Activated CD8-positive, alpha-beta T cell treated with anti-CD3 and anti-CD28 coated beads, Interleukin-2, amount 10 ng/mL, durations not matched to agents 7 days and 5 days (primary cell): ENCODE measurements at regions of chr17 and their contacts with region 1.

Region 1: DNA sequence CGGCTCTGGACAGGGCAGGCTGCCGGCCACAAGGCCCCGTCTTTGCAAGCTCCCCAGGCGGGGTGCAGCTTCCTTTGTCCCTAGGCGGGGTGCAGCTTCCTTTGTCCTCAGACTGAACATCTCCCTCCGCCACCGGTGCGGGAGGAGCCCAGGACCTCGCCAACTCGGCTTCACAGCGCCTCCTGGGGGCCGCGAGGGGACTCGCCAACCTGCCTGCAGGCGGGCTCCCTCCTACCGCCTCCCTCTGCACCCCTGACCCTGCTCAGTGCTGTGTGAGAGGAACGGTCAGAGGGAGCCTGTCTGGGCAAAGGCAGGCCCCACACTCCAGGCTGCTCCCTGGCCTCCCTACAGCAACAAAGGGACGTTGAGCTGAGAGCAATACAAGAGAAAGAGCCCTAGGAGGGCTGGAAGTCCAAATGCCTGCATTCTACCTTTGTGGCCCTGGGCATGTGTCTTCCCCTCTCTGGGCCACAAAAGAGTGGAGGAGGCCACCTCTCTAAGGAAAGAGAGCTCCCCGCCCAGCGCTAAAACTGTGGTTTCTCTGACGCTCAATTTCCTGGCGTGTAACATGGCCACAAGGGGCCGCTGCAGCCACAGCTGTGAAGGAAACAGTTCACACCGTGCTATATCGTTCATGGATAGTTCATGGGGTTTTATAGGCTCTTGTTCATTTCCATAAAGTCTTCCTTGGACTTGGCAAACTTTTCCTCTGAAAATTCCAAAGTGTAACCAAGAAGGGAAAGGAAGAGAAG is 20.9 kb upstream of the KRT19 start:
- DNase-seq: peak; percentile 92
- ATAC-seq: peak; percentile 91
- H3K4me3 Mint-ChIP-seq: peak overlapping the region; percentile 23
- H3K27ac Mint-ChIP-seq: peak overlapping the region; percentile 77
- H3K4me1 Mint-ChIP-seq: peaks cover 20% of the 10 kb centered on the region
- H3K27me3 Mint-ChIP-seq: peaks cover 10% of the 10 kb centered on the region

Region 2: GRCh38 chr17:40857535-40857934 is 691.5 kb before region 1 on chr17:
- CTCF ChIA-PET with region 1: interaction called, 20 read pairs
- POLR2A ChIA-PET with region 1: no interaction called
- DNase-seq: no peak
- ATAC-seq: no peak
- H3K4me3 Mint-ChIP-seq: no peak overlapping the region
- H3K27ac Mint-ChIP-seq: no peak overlapping the region
- H3K4me1 Mint-ChIP-seq: no peaks in the 10 kb centered on the region
- H3K27me3 Mint-ChIP-seq: peaks cover 21% of the 10 kb centered on the region

Region 3: GRCh38 chr17:41308251-41308917 is 240.6 kb before region 1 on chr17:
- CTCF ChIA-PET with region 1: interaction called, 11 read pairs
- POLR2A ChIA-PET with region 1: no interaction called
- DNase-seq: peak; percentile 74
- ATAC-seq: peak; percentile 79
- H3K4me3 Mint-ChIP-seq: peak overlapping the region; percentile 48
- H3K27ac Mint-ChIP-seq: peak overlapping the region; percentile 90
- H3K4me1 Mint-ChIP-seq: peaks cover 42% of the 10 kb centered on the region
- H3K27me3 Mint-ChIP-seq: no peaks in the 10 kb centered on the region

Region 4: DNA sequence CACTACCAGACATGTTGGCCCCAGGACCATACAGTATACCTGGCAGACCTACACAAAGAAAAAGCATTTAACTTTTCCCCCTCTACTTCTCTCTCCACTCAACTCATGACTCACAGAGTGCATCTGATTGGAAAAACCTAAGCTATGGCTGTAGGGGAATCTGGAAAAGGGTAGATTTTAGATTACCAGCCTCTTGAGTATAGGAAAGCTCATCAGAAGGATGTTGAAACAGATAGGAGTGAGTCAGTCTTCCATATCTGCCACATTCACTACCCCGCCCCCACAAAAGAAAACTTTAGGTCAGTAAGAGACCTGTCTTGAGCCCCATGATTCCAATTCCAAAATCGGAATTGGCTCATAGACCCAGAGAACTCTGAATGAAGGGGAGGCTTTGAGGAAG is 10.5 kb after region 1 on chr17:
- CTCF ChIA-PET with region 1: interaction called, 31 read pairs
- POLR2A ChIA-PET with region 1: no interaction called
- DNase-seq: no peak
- ATAC-seq: no peak
- H3K4me3 Mint-ChIP-seq: no peak overlapping the region
- H3K27ac Mint-ChIP-seq: no peak overlapping the region
- H3K4me1 Mint-ChIP-seq: no peaks in the 10 kb centered on the region
- H3K27me3 Mint-ChIP-seq: peaks cover 31% of the 10 kb centered on the region

Region 5: DNA sequence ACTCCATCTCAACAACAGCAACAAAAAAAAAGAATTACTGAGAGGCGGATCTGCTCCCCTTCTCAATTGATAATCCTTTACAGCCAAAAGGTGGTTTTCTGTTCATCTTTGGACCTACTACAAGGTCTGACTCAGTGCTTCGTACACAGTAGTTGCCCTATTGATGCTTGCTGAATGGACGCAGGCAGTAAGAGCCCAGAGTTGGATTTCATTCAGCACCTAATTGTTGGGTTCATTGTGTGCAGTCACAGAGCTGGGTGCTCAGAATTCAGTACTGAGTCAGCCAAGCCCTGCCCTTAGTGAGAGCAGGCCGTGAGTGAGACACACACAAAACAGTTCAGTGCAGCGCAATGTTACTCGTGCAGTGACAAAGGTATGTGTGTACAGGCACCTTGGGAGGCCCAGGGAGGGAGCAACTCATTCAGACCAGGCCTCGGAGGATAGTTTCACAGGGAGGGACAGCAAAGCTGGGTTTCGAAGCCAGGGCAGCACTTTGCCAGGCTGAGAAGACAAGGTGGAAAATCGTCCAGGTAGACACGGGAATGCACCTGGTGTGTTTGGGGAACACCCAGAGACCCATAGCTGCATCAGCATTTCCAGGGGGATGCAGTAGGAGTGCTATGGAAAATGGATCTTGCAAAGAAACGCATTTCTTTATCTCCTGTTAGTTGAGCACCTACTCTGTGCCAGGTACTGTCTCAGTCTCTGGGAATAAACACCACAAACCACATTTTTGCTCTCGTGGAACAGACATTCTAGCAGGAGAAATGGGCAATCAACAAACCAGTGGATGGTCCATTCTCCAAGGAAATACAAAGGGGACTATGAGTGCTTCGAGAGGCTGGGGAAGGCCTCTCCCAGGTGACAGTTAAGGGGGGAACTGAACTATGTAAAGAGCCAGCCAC is 93.5 kb after region 1 on chr17:
- CTCF ChIA-PET with region 1: interaction called, 107 read pairs
- POLR2A ChIA-PET with region 1: interaction called, 6 read pairs
- DNase-seq: no peak
- ATAC-seq: no peak
- H3K4me3 Mint-ChIP-seq: no peak overlapping the region
- H3K27ac Mint-ChIP-seq: no peak overlapping the region
- H3K4me1 Mint-ChIP-seq: no peaks in the 10 kb centered on the region
- H3K27me3 Mint-ChIP-seq: no peaks in the 10 kb centered on the region

Region 6: GRCh38 chr17:41665566-41666236 is 116.7 kb after region 1 on chr17:
- CTCF ChIA-PET with region 1: interaction called, 204 read pairs
- POLR2A ChIA-PET with region 1: no interaction called
- DNase-seq: peak; percentile 91
- ATAC-seq: peak; percentile 89
- H3K4me3 Mint-ChIP-seq: peak overlapping the region; percentile 82
- H3K27ac Mint-ChIP-seq: peak overlapping the region; percentile 93
- H3K4me1 Mint-ChIP-seq: peaks cover 38% of the 10 kb centered on the region
- H3K27me3 Mint-ChIP-seq: peaks cover 17% of the 10 kb centered on the region

Region 7: GRCh38 chr17:41717408-41718286 is 168.6 kb after region 1 on chr17:
- CTCF ChIA-PET with region 1: no interaction called
- POLR2A ChIA-PET with region 1: no interaction called
- DNase-seq: no peak
- ATAC-seq: no peak
- H3K4me3 Mint-ChIP-seq: no peak overlapping the region
- H3K27ac Mint-ChIP-seq: no peak overlapping the region
- H3K4me1 Mint-ChIP-seq: peaks cover 5% of the 10 kb centered on the region
- H3K27me3 Mint-ChIP-seq: peaks cover 9% of the 10 kb centered on the region